Activated CD8-positive, alpha-beta T cell treated with anti-CD3 and anti-CD28 coated beads, Interleukin-2, amount 10 ng/mL, durations not matched to agents 7 days and 5 days (primary cell): ENCODE measurements at regions of chr14 and their contacts with region 1.

Region 1: GRCh38 chr14:49585803-49586672 is at the start of gene RPS29:
- DNase-seq: peak; percentile 99
- ATAC-seq: peak; percentile 93
- H3K4me3 Mint-ChIP-seq: peak within 1 kb of the TSS; percentile 81
- H3K27ac Mint-ChIP-seq: peak within 1 kb of the TSS; percentile 99
- H3K4me1 Mint-ChIP-seq: peaks cover 38% of the 10 kb centered on the region
- H3K27me3 Mint-ChIP-seq: no peaks in the 10 kb centered on the region
- total RNA-seq, gene RPS29: 1,224 to 1,602 TPM

Region 2: GRCh38 chr14:49598485-49599300 is 12.7 kb after region 1 on chr14 and contains the start of gene LRR1:
- CTCF ChIA-PET with region 1: interaction called, 45 read pairs
- POLR2A ChIA-PET with region 1: interaction called, 112 read pairs
- DNase-seq: peak; percentile 90
- ATAC-seq: peak; percentile 86
- H3K4me3 Mint-ChIP-seq: peak within 1 kb of the TSS; percentile 99
- H3K27ac Mint-ChIP-seq: peak within 1 kb of the TSS; percentile 99
- H3K4me1 Mint-ChIP-seq: peaks cover 37% of the 10 kb centered on the region
- H3K27me3 Mint-ChIP-seq: no peaks in the 10 kb centered on the region
- total RNA-seq, gene LRR1: 63.1 to 65.0 TPM

Region 3: DNA sequence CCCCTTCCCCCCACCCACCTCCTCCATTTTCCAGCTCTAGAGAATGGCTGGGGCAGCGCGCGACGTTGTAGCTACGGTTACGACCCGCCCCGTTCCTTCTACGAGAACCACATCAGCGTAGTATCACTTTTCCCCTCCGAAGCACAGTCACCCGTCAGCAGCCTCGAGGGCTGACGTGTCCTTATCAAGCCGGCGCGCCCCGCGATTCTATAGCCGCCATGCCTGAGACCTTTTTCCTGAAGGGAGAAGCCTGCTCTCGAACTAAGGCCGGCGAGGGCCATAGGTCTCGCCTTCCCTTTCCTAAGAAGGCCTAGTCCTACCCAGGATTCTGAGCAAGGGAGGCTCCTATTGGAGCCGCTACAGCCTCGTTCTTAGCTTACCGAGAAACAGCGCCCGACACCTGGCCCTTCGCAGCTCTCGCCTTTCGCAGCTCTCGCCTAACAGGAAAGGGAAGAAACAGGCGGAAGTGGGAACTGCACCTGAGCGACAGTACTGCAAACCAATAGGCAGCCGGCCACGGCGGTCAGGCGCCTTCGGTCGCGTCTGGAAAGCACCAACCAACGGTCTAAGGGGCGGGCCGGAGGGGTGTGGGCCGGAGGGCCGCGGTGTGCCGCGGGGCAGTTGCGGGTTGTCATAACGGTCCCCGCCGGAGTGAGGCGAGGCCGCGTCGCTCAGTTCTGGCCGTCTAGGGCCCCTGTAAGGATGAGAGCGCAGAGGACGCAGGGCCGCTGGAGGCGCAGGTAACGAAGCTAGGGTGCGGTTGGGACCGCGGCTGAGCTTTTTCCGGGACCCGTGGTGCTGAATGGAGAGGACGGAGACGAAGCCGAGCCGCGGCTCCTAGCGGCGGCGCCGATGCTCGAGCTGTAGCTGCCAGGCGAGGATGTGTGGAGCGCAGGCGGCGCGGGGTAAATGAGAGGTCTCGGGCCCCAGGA is 34.4 kb after region 1 on chr14 and contains the starts of genes MGAT2 and RPL36AL:
- CTCF ChIA-PET with region 1: interaction called, 17 read pairs
- POLR2A ChIA-PET with region 1: interaction called, 73 read pairs
- DNase-seq: peak; percentile 97
- ATAC-seq: peak; percentile 91
- H3K4me3 Mint-ChIP-seq: peak within 1 kb of the TSS; percentile 93
- H3K27ac Mint-ChIP-seq: peak within 1 kb of the TSS; percentile 96
- H3K4me1 Mint-ChIP-seq: peaks cover 58% of the 10 kb centered on the region
- H3K27me3 Mint-ChIP-seq: no peaks in the 10 kb centered on the region
- total RNA-seq, gene MGAT2: 55.1 to 57.4 TPM
- total RNA-seq, gene RPL36AL: 229 to 241 TPM